Activated CD8-positive, alpha-beta T cell treated with anti-CD3 and anti-CD28 coated beads, Interleukin-2, amount 10 ng/mL, durations not matched to agents 7 days and 5 days (primary cell): ENCODE measurements at regions of chr16 and their contacts with region 1.

Region 1: GRCh38 chr16:85420501-85421337 is 192.4 kb upstream of the GSE1 start:
- DNase-seq: peak; percentile 79
- ATAC-seq: peak; percentile 81
- H3K4me3 Mint-ChIP-seq: no peak overlapping the region
- H3K27ac Mint-ChIP-seq: no peak overlapping the region
- H3K4me1 Mint-ChIP-seq: peaks cover 9% of the 10 kb centered on the region
- H3K27me3 Mint-ChIP-seq: no peaks in the 10 kb centered on the region

Region 2: GRCh38 chr16:85448557-85449197 is 28.0 kb after region 1 on chr16:
- CTCF ChIA-PET with region 1: interaction called, 20 read pairs
- POLR2A ChIA-PET with region 1: no interaction called
- DNase-seq: peak; percentile 65
- ATAC-seq: peak; percentile 67
- H3K4me3 Mint-ChIP-seq: peak overlapping the region; percentile 10
- H3K27ac Mint-ChIP-seq: peak overlapping the region; percentile 58
- H3K4me1 Mint-ChIP-seq: peaks cover 40% of the 10 kb centered on the region
- H3K27me3 Mint-ChIP-seq: no peaks in the 10 kb centered on the region

Region 3: GRCh38 chr16:85475233-85475632 is 54.5 kb after region 1 on chr16:
- CTCF ChIA-PET with region 1: no interaction called
- POLR2A ChIA-PET with region 1: no interaction called
- DNase-seq: no peak
- ATAC-seq: no peak
- H3K4me3 Mint-ChIP-seq: no peak overlapping the region
- H3K27ac Mint-ChIP-seq: no peak overlapping the region
- H3K4me1 Mint-ChIP-seq: no peaks in the 10 kb centered on the region
- H3K27me3 Mint-ChIP-seq: no peaks in the 10 kb centered on the region